T-cell (primary cell): ENCODE measurements at regions of chr12 and their contacts with region 1.

Region 1: GRCh38 chr12:92585115-92585727 is 117.6 kb upstream of the PLEKHG7 start:
- DNase-seq: no peak
- ATAC-seq: no peak
- H3K4me3 ChIP-seq: no peak overlapping the region
- H3K4me3 Mint-ChIP-seq: no peak overlapping the region
- H3K27ac ChIP-seq: no peak overlapping the region
- H3K27ac Mint-ChIP-seq: no peak overlapping the region
- H3K4me1 ChIP-seq: no peaks in the 10 kb centered on the region
- H3K4me1 Mint-ChIP-seq: peaks cover 0 to 14% (median 4%) of the 10 kb centered on the region in 3 donors
- H3K27me3 ChIP-seq: no peaks in the 10 kb centered on the region
- H3K27me3 Mint-ChIP-seq: no peaks in the 10 kb centered on the region

Region 2: DNA sequence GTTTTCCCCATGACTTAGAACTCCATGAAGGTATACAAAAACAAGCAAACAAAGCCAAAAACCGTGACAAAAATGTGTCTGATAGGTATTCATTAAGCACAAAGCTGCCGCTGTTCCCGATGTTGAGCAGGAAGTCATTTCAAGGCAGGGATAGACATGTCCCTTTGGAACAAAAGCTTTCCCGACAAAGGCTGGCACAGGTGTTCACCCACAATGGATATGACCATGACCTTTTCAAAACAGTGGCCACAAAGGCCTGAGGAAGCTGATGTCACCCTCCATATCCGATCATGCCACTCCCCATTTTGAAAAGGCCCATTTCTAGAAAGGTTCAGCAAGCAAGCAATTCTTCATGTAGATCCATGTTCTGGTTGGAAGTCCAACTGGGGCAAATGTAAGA is 718.7 kb before region 1 on chr12:
- CTCF ChIA-PET with region 1: no interaction called
- POLR2A ChIA-PET with region 1: interaction called in 1 of 2 experiments, 15 read pairs
- DNase-seq: no peak
- ATAC-seq: no peak
- H3K4me3 ChIP-seq: no peak overlapping the region
- H3K4me3 Mint-ChIP-seq: no peak overlapping the region
- H3K27ac ChIP-seq: no peak overlapping the region
- H3K27ac Mint-ChIP-seq: no peak overlapping the region
- H3K4me1 ChIP-seq: peaks cover 17 to 36% of the 10 kb centered on the region in 2 experiments
- H3K4me1 Mint-ChIP-seq: peaks cover 53 to 73% (median 56%) of the 10 kb centered on the region in 3 donors
- H3K27me3 ChIP-seq: no peaks in the 10 kb centered on the region
- H3K27me3 Mint-ChIP-seq: no peaks in the 10 kb centered on the region

Region 3: DNA sequence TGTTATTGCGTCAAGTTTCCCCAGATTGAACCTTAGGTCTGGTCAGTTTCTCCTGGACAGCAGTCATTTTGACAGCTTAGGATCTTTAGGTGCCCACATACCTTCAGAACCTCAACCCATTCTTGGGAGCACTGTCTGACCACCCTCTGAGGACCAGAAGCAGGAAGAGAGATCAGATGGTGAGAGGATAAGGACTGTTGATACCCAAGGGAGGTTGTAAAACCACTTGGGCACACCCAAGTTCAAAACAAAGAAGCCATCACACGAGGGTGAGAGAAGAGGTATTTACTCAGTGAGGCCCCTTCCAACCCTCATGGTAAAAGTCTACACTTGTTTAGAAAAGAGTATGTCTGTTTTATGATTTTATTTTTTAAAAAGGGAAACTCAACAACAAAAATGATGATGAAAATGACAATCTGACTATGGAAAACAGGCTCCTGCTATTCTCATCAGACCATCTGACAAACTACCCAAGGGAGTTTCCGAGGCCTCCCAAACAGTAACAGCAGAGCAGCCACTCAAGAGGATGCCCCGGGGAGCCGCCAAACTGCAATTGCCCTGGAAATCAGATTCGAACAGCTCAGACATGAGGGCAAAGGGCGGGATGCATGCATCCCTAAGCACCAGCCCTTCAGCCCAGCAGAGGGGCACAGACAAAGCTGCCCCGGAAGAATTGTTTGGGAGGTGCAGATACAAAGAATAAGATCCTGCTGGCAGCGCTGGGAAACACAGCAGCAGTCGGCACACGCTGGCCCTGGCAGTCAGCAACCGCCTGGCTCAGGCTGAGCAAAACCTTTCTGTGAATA is 45.0 kb before region 1 on chr12:
- CTCF ChIA-PET with region 1: no interaction called
- POLR2A ChIA-PET with region 1: no interaction called
- DNase-seq: peak in 3 of 35 experiments; percentile 2 to 41 (median 13)
- ATAC-seq: peak; percentile 54 to 72 (median 63)
- H3K4me3 ChIP-seq: no peak overlapping the region
- H3K4me3 Mint-ChIP-seq: peak overlapping the region in 2 of 3 donors; percentile 39 to 54
- H3K27ac ChIP-seq: peak overlapping the region; percentile 82
- H3K27ac Mint-ChIP-seq: peak overlapping the region; percentile 88 to 94
- H3K4me1 ChIP-seq: peaks cover 10 to 37% of the 10 kb centered on the region in 2 experiments
- H3K4me1 Mint-ChIP-seq: peaks cover 54 to 69% (median 58%) of the 10 kb centered on the region in 3 donors
- H3K27me3 ChIP-seq: no peaks in the 10 kb centered on the region
- H3K27me3 Mint-ChIP-seq: no peaks in the 10 kb centered on the region

Region 4: GRCh38 chr12:92639017-92639416 is 53.8 kb after region 1 on chr12:
- CTCF ChIA-PET with region 1: no interaction called
- POLR2A ChIA-PET with region 1: no interaction called
- DNase-seq: no peak
- ATAC-seq: no peak
- H3K4me3 ChIP-seq: no peak overlapping the region
- H3K4me3 Mint-ChIP-seq: no peak overlapping the region
- H3K27ac ChIP-seq: no peak overlapping the region
- H3K27ac Mint-ChIP-seq: no peak overlapping the region
- H3K4me1 ChIP-seq: no peaks in the 10 kb centered on the region
- H3K4me1 Mint-ChIP-seq: no peaks in the 10 kb centered on the region
- H3K27me3 ChIP-seq: no peaks in the 10 kb centered on the region
- H3K27me3 Mint-ChIP-seq: no peaks in the 10 kb centered on the region